HEK293T (cell line): ENCODE measurements at regions of chr21 and their contacts with region 1.

Region 1: GRCh38 chr21:39441502-39442475 is 3.8 kb downstream of the LCA5L start:
- DNase-seq: peak; percentile 62

Region 2: GRCh38 chr21:39430457-39430856 is 11.3 kb before region 1 on chr21:
- CTCF ChIA-PET with region 1: interaction called, 19 read pairs
- POLR2A ChIA-PET with region 1: interaction called, 4 read pairs
- DNase-seq: no peak